CD8-positive, alpha-beta T cell (primary cell): ENCODE measurements at regions of chr14 and their contacts with region 1.

Region 1: DNA sequence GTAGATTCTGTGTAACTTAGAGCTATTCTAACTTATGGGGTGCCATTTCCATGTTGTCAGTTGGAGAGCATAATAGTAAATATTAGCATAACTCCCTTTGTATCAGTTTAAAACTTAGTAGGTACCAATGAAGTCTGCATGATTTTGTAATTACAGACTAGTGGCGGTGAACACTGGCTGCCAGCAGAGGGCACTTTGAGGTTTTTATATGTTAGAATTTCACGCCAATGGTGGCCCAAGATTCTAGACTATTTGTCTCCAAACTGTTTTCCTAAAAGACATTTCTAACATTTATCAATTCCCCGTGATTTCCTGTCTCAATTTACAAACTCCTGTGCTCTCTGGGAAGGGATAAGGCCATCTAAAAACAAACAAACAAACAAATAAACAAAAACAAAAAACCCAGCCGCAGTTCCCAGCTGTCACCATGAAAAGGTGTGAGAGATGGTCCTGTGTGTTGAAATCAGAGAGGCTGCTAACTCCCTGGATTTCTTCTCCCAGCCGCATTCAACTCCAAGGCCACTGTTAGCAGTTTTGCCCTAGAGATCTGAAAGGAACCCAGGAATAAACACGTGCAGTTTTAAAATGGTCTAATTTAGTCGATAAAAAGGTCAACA is 57.6 kb downstream of the BRMS1L start:
- DNase-seq: peak in 3 of 9 experiments; percentile 10 to 39 (median 26)
- ATAC-seq: no peak
- H3K4me3 ChIP-seq: no peak overlapping the region
- H3K4me3 Mint-ChIP-seq: no peak overlapping the region
- H3K27ac ChIP-seq: no peak overlapping the region
- H3K27ac Mint-ChIP-seq: no peak overlapping the region
- H3K4me1 ChIP-seq: no peaks in the 10 kb centered on the region
- H3K4me1 Mint-ChIP-seq: peaks cover 2% of the 10 kb centered on the region
- H3K27me3 ChIP-seq: no peaks in the 10 kb centered on the region
- H3K27me3 Mint-ChIP-seq: peaks cover 3% of the 10 kb centered on the region
- CTCF ChIP-seq: peak; percentile 68

Region 2: DNA sequence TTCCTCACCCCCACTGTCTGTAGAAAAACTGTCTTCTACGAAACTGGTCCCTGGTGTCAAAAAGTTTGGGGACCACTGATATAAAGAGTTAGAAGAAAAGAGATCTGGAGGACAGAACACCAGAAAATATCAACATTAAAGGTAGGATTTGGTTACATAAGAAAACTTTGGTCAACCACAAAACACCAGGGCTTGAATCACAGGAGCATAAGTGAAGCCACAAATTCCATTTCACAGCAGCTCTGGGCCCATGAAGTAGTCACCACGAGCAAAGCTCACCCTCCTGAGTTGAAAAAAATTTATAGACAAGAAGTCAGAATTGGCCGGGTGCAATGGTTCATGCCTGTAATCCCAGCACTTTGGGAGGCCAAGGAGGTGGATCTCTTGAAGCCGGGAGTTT is 94.1 kb before region 1 on chr14:
- CTCF ChIA-PET with region 1: no interaction called
- POLR2A ChIA-PET with region 1: no interaction called
- intact Hi-C with region 1: no loop called
- DNase-seq: peak in 3 of 9 experiments; percentile 18 to 35 (median 21)
- ATAC-seq: no peak
- H3K4me3 ChIP-seq: no peak overlapping the region
- H3K4me3 Mint-ChIP-seq: no peak overlapping the region
- H3K27ac ChIP-seq: no peak overlapping the region
- H3K27ac Mint-ChIP-seq: no peak overlapping the region
- H3K4me1 ChIP-seq: peaks cover 13% of the 10 kb centered on the region
- H3K4me1 Mint-ChIP-seq: peaks cover 41% of the 10 kb centered on the region
- H3K27me3 ChIP-seq: no peaks in the 10 kb centered on the region
- H3K27me3 Mint-ChIP-seq: no peaks in the 10 kb centered on the region
- CTCF ChIP-seq: no peak

Region 3: DNA sequence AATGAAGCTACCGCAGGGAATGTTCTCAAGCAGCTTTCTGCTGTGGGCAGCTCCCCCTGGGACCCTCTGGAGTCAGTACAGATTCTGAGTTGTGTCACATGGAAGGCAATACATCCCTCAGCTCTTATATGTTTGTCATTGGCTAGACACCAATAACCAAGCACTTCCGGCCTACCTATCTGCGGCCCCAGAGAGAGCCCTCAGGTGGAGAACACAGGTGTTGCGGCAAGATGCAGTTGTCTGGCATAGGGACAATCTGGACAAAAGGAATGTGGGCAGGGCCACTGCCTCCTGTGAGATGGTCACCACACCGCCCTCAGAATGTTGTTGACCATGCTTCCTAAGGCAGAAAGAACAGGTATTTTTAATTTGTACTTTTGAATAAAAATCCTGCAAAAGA is 61.1 kb after region 1 on chr14:
- CTCF ChIA-PET with region 1: interaction called, 10 read pairs
- POLR2A ChIA-PET with region 1: no interaction called
- intact Hi-C with region 1: no loop called
- DNase-seq: peak in 1 of 9 experiments; percentile 7
- ATAC-seq: no peak
- H3K4me3 ChIP-seq: no peak overlapping the region
- H3K4me3 Mint-ChIP-seq: no peak overlapping the region
- H3K27ac ChIP-seq: no peak overlapping the region
- H3K27ac Mint-ChIP-seq: no peak overlapping the region
- H3K4me1 ChIP-seq: no peaks in the 10 kb centered on the region
- H3K4me1 Mint-ChIP-seq: no peaks in the 10 kb centered on the region
- H3K27me3 ChIP-seq: no peaks in the 10 kb centered on the region
- H3K27me3 Mint-ChIP-seq: no peaks in the 10 kb centered on the region
- CTCF ChIP-seq: no peak

Region 4: DNA sequence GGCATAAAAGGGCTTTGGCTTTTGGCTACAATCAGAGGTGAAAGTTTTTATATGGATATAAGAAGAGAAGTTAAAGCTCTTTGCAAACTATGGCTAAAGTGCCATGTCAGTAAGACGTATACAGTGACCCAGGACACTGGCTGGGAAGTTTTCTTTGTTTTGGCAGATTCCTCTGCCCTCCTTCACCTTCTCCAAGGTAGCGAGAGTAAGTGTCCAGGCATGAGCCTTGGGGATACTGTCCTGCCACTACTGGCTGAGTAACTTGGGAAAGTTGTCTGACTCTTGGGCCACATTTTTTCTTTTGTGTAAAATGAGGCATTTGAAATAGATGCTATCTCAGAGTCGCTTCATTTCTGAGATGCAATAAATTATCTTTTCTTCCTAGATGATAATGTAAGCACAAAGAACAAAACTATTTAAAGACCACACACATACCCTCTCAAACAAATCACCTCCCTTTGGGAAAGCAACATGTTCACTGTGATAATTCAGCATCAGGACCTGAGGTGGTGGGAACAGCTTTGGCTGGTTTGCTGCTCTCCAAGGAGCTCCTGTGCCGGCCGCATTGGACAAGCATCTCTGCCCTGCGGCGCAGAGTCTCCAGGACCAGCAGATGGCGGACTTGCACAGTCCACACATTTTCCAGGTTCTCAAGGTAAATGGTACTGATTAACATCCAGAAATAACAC is 186.4 kb after region 1 on chr14:
- CTCF ChIA-PET with region 1: interaction called, 38 read pairs
- POLR2A ChIA-PET with region 1: no interaction called
- intact Hi-C with region 1: loop called (anchors 1 kb)
- DNase-seq: peak in 1 of 9 experiments; percentile 3
- ATAC-seq: no peak
- H3K4me3 ChIP-seq: no peak overlapping the region
- H3K4me3 Mint-ChIP-seq: no peak overlapping the region
- H3K27ac ChIP-seq: no peak overlapping the region
- H3K27ac Mint-ChIP-seq: no peak overlapping the region
- H3K4me1 ChIP-seq: no peaks in the 10 kb centered on the region
- H3K4me1 Mint-ChIP-seq: no peaks in the 10 kb centered on the region
- H3K27me3 ChIP-seq: no peaks in the 10 kb centered on the region
- H3K27me3 Mint-ChIP-seq: peaks cover 32% of the 10 kb centered on the region
- CTCF ChIP-seq: no peak

Region 5: GRCh38 chr14:36553656-36554260 is 670.0 kb after region 1 on chr14:
- CTCF ChIA-PET with region 1: no interaction called
- POLR2A ChIA-PET with region 1: no interaction called
- intact Hi-C with region 1: loop called in 1 of 2 experiments (anchors 5 kb)
- DNase-seq: peak in 2 of 9 experiments; percentile 6 to 16
- ATAC-seq: no peak
- H3K4me3 ChIP-seq: no peak overlapping the region
- H3K4me3 Mint-ChIP-seq: no peak overlapping the region
- H3K27ac ChIP-seq: no peak overlapping the region
- H3K27ac Mint-ChIP-seq: no peak overlapping the region
- H3K4me1 ChIP-seq: no peaks in the 10 kb centered on the region
- H3K4me1 Mint-ChIP-seq: no peaks in the 10 kb centered on the region
- H3K27me3 ChIP-seq: no peaks in the 10 kb centered on the region
- H3K27me3 Mint-ChIP-seq: peaks cover 11% of the 10 kb centered on the region
- CTCF ChIP-seq: peak; percentile 36

Region 6: GRCh38 chr14:36941783-36942521 is 1058.2 kb after region 1 on chr14:
- CTCF ChIA-PET with region 1: no interaction called
- POLR2A ChIA-PET with region 1: no interaction called
- intact Hi-C with region 1: loop called in 1 of 2 experiments (anchors 2 kb)
- DNase-seq: peak in 8 of 9 experiments; percentile 3 to 48 (median 23)
- ATAC-seq: peak; percentile 51
- H3K4me3 ChIP-seq: no peak overlapping the region
- H3K4me3 Mint-ChIP-seq: no peak overlapping the region
- H3K27ac ChIP-seq: no peak overlapping the region
- H3K27ac Mint-ChIP-seq: no peak overlapping the region
- H3K4me1 ChIP-seq: no peaks in the 10 kb centered on the region
- H3K4me1 Mint-ChIP-seq: no peaks in the 10 kb centered on the region
- H3K27me3 ChIP-seq: no peaks in the 10 kb centered on the region
- H3K27me3 Mint-ChIP-seq: no peaks in the 10 kb centered on the region
- CTCF ChIP-seq: peak; percentile 91